AG04450 (cell line): ENCODE measurements at regions of chr10 and their contacts with region 1.

Region 1: GRCh38 chr10:99845837-99846382 is 63.5 kb downstream of the ABCC2 start:
- DNase-seq: peak; percentile 93
- H3K4me3 ChIP-seq: peak overlapping the region; percentile 34; the same call in 1 of the 2 replicates
- H3K27ac ChIP-seq: peak overlapping the region; percentile 22
- H3K27me3 ChIP-seq: no peaks in the 10 kb centered on the region
- CTCF ChIP-seq: peak; percentile 95

Region 2: GRCh38 chr10:99115703-99116102 is 730.2 kb before region 1 on chr10:
- CTCF ChIA-PET with region 1: no interaction called
- POLR2A ChIA-PET with region 1: no interaction called
- DNase-seq: no peak
- H3K4me3 ChIP-seq: no peak overlapping the region
- H3K27ac ChIP-seq: no peak overlapping the region
- H3K27me3 ChIP-seq: no peaks in the 10 kb centered on the region
- CTCF ChIP-seq: no peak

Region 3: DNA sequence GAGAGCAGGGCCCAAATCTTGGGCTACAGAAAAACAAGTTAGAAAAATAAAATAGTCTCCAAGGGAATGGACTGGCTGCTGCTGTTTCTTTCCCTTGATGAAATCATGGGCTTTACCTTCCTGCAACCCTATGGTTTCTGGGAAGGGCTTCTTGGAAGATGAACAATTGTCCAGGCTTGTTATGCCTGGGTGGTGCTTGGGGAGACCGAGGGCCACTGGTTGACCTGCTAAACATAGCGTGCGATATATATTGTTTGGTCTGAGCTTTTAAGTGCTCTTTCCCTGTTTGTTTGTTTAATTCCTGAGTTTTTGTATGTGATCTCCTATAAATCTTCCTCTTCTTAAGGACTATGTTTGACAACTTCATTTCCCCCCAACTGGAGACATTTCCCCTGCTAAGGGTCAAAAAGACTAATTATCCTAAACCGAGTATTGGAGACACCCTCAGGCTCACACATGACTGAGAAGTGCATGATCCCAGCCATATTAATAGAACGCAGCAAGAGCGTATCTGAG is 263.6 kb before region 1 on chr10:
- CTCF ChIA-PET with region 1: no interaction called
- POLR2A ChIA-PET with region 1: no interaction called
- DNase-seq: no peak
- H3K4me3 ChIP-seq: no peak overlapping the region
- H3K27ac ChIP-seq: no peak overlapping the region
- H3K27me3 ChIP-seq: peaks cover 18% of the 10 kb centered on the region
- CTCF ChIP-seq: no peak

Region 4: GRCh38 chr10:99791831-99792230 is 54.1 kb before region 1 on chr10:
- CTCF ChIA-PET with region 1: interaction called, 15 read pairs
- POLR2A ChIA-PET with region 1: no interaction called
- DNase-seq: no peak
- H3K4me3 ChIP-seq: no peak overlapping the region
- H3K27ac ChIP-seq: no peak overlapping the region
- H3K27me3 ChIP-seq: no peaks in the 10 kb centered on the region
- CTCF ChIP-seq: no peak

Region 5: GRCh38 chr10:99926925-99927720 is 81.2 kb after region 1 on chr10:
- CTCF ChIA-PET with region 1: interaction called, 11 read pairs
- POLR2A ChIA-PET with region 1: no interaction called
- DNase-seq: no peak
- H3K4me3 ChIP-seq: no peak overlapping the region
- H3K27ac ChIP-seq: no peak overlapping the region
- H3K27me3 ChIP-seq: no peaks in the 10 kb centered on the region
- CTCF ChIP-seq: no peak

Region 6: DNA sequence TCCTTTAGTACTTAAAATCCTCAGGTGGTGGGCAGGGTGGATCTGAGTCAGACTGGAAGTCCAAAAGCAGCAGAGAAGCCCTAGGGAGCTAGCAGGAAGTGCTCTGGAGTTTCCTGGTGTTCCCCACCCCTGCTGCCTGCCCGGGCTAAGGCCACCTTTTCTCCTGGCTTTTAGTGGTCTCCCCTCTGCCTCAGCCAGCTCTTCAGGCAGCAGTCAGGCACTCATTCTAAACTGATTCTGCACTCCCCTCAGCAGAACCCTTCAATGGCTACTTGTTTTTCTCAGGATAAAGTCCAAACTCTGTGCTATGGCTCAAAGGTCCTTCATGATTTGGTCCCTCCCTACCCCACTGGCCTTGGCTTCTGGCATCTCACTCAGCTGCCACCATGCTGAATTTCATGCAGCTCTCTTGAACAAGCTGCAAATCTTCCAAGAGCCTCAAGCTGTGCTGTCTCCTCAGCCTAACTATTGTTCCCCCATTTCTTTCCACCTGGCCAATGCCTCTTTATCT is 192.7 kb after region 1 on chr10:
- CTCF ChIA-PET with region 1: interaction called, 325 read pairs
- POLR2A ChIA-PET with region 1: no interaction called
- DNase-seq: no peak
- H3K4me3 ChIP-seq: no peak overlapping the region
- H3K27ac ChIP-seq: no peak overlapping the region
- H3K27me3 ChIP-seq: no peaks in the 10 kb centered on the region
- CTCF ChIP-seq: no peak

Region 7: DNA sequence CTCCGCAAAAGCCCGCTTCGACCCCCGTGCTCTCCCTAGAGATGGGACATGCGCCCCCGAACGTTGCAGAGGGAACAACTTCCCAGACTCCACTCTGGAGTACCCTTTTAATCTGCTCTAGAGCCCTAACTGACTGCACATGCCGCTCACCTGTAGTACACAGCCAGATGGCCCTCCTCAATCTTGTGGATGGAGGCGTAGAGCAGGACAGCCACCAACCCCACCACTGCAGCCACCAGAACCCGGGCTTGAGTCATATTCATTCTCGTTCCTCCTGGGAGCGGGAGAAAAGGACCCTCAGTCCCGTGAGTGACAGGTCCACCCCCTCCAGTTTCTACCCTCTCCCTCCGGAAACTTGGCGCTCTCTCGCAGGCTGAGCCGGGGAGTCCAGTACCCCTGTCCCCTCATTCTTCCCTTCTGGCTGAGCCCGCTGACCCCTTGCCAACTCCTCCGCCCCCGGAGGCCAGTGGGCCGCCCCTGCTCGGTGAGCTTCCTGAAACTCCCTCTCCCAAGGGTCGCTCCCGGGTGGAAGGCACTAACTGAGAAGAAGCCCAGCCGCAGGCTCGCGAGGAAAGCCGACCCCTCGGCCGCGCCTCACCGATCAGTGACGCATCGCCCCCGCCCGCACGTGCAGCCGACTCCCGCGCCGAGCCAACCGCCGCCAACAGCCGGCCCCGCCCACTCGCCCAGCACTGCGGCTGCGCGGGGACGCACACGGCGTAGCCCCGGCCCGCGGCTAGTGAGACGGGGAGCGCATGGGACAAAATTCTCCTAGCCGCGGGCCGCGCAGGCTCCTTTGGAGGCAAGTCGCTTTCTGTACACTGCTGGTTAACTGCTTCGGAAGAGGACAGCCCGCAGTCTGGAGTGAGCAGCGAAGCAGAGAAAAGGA is 339.7 kb after region 1 on chr10 and contains the start of gene ERLIN1:
- CTCF ChIA-PET with region 1: interaction called, 24 read pairs
- POLR2A ChIA-PET with region 1: no interaction called
- DNase-seq: peak; percentile 63
- H3K4me3 ChIP-seq: peak within 1 kb of the TSS; percentile 90
- H3K27ac ChIP-seq: peak within 1 kb of the TSS; percentile 77
- H3K27me3 ChIP-seq: no peaks in the 10 kb centered on the region
- CTCF ChIP-seq: 0 out of 2 replicates have a peak, but pooled peaks have one; percentile 12
- polyA plus RNA-seq, gene ERLIN1: 40.4 and 50.1 TPM in 2 replicates

Region 8: DNA sequence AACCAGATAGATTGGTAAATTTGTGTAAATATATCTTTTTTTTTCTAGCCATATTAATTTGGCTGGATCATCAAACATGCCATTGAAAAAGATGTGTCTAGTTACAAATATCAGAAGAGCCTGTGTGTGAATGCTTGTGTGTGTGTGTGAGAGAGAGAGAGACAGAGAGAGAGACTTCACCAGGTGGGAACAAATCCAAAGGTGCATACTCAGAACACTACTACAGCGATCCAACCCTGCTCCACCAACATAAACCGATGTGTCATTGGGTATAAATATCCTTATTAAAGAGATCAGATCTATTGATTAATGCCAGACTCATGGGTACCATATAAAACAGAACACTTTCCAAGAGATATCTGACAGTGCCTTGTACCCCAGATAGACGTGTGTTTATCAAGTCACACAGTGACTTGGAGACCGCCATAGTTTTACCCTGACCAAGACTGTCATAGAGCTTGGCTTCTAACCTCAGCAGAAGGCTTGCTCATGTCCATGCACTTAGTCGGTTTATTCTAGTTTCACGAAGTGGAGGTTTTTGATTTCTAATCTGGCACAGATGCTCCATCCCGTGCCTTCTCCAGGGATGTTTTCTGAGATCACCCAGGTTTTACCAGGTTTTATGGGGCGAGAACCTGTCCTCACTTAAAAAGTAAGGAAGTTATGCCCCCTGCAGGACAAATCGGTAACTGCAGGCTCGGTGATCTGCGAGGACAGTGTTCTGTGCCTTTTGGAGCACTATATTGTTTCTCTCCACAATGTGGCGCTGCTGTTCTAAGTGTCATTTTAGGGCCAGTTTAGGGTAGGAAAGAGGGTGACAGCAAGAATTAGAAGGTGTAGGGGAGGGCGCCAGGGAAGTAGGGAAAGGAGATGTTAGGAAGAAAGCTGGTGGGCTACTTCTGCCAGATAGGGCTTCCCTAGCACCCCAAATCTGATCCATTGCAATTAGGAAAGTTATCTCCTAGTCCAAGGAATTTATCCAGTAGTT is 587.6 kb after region 1 on chr10:
- CTCF ChIA-PET with region 1: interaction called, 16 read pairs
- POLR2A ChIA-PET with region 1: no interaction called
- DNase-seq: peak; percentile 81
- H3K4me3 ChIP-seq: no peak overlapping the region
- H3K27ac ChIP-seq: no peak overlapping the region
- H3K27me3 ChIP-seq: peaks cover 3% of the 10 kb centered on the region
- CTCF ChIP-seq: peak; percentile 99